H1 (cell line): ENCODE measurements at regions of chr11 and their contacts with region 1.

Region 1: GRCh38 chr11:34165518-34166277 is 60.3 kb downstream of the NAT10 start:
- DNase-seq: no peak
- H3K4me3 ChIP-seq: no peak overlapping the region
- H3K27ac ChIP-seq: no peak overlapping the region
- H3K4me1 ChIP-seq: no peaks in the 10 kb centered on the region
- H3K27me3 ChIP-seq: no peaks in the 10 kb centered on the region
- CTCF ChIP-seq: peak in 2 of 3 experiments; percentile 37 to 40; a peak in 3 of 4 replicates
- EP300 ChIP-seq: no peak
- POLR2A ChIP-seq: no peak
- RAD21 ChIP-seq: peak; percentile 29 to 45; a peak in 2 of 4 replicates

Region 2: GRCh38 chr11:34051349-34052035 is 114.2 kb before region 1 on chr11 and contains the start of gene CAPRIN1:
- CTCF ChIA-PET with region 1: no interaction called
- POLR2A ChIA-PET with region 1: no interaction called
- DNase-seq: peak; percentile 84 to 86
- H3K4me3 ChIP-seq: peak within 1 kb of the TSS; percentile 86 to 96 (median 94)
- H3K27ac ChIP-seq: peak within 1 kb of the TSS; percentile 97
- H3K4me1 ChIP-seq: peaks cover 0 to 3% (median 3%) of the 10 kb centered on the region in 4 experiments; a peak in 4 of 7 replicates
- H3K27me3 ChIP-seq: no peaks in the 10 kb centered on the region
- CTCF ChIP-seq: no peak
- EP300 ChIP-seq: 0 out of 3 replicates have a peak, but pooled peaks of 1 of the 2 experiments have one; percentile 15
- POLR2A ChIP-seq: peak; percentile 71 to 81
- RAD21 ChIP-seq: no peak
- total RNA-seq, gene CAPRIN1: 295 and 317 TPM in 2 replicates

Region 3: DNA sequence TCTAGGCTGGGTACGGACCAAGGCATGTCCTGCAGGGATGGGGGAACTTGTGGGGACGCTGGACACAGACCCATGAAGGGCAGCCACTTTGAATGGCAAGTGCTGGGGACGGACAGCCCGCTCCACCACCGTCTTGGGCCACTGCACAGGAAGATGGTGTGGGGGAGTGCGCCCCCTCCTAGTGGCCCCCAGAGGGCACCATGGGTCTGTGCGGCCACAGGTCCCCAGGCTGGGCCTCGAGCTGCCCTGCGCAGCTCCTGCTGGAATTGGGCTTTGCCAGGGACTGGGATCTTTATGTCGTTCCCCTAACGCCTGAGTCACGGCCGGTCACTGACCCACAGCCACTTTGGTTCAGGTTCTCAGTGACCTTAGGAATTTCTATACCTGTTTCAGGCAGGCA is 15.9 kb before region 1 on chr11:
- CTCF ChIA-PET with region 1: interaction called, 89 read pairs
- POLR2A ChIA-PET with region 1: interaction called, 5 read pairs
- DNase-seq: peak in 1 of 2 experiments; percentile 59
- H3K4me3 ChIP-seq: no peak overlapping the region
- H3K27ac ChIP-seq: no peak overlapping the region
- H3K4me1 ChIP-seq: no peaks in the 10 kb centered on the region
- H3K27me3 ChIP-seq: no peaks in the 10 kb centered on the region
- CTCF ChIP-seq: peak; percentile 61 to 70 (median 65)
- EP300 ChIP-seq: no peak
- POLR2A ChIP-seq: no peak
- RAD21 ChIP-seq: peak; percentile 67 to 77